WTC11 (cell line): ENCODE measurements at regions of chr21 and their contacts with region 1.

Region 1: GRCh38 chr21:39581414-39581813 is 31.3 kb upstream of the B3GALT5 start:
- DNase-seq: no peak
- ATAC-seq: peak; percentile 95
- H3K4me3 Mint-ChIP-seq: no peak overlapping the region
- H3K27ac Mint-ChIP-seq: no peak overlapping the region
- H3K4me1 Mint-ChIP-seq: peaks cover 28% of the 10 kb centered on the region
- H3K27me3 Mint-ChIP-seq: no peaks in the 10 kb centered on the region
- CTCF ChIP-seq: no peak

Region 2: GRCh38 chr21:39568361-39568760 is 13.1 kb before region 1 on chr21:
- CTCF ChIA-PET with region 1: interaction called, 10 read pairs
- POLR2A ChIA-PET with region 1: no interaction called
- DNase-seq: no peak
- ATAC-seq: peak; percentile 62
- H3K4me3 Mint-ChIP-seq: no peak overlapping the region
- H3K27ac Mint-ChIP-seq: no peak overlapping the region
- H3K4me1 Mint-ChIP-seq: peaks cover 8% of the 10 kb centered on the region
- H3K27me3 Mint-ChIP-seq: no peaks in the 10 kb centered on the region
- CTCF ChIP-seq: no peak

Region 3: DNA sequence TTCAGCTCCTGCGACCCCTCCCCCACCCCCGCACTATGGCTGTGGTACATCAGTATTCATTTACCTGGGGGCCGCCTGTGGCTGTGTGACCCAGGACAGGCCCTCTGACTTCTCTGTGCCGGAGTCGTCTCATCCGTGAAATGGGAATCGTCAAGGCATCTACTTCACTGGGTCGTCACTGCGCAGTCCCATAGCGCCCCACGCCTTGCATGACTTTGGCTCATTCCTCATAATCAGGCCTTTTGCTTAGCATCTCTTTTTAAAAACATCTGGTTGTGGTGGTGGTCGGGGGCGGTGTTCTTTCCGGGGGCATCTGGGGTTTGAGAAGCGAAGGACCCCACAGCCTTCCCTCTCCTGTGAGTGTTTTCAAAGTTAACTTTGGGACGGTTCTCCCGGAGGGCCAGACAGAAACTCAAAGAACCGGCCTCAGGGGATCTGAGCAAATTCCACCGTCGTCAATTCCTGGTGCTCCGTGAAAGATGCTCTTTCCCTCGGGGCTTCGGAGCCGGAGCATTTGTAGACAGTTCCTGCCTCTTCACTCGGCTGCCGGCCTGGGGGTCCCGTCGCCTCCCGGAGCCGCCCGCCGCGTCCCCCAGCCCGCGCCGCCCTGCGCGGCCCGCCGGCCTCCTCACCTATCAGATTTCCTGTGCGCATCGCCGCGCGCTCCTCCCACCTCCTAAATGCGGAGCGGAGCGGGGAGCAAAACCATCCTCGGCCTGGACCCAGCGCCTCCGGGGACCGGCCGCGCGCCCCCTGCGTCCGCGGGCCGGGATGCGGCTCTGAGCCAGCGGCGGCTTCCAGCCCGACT is 31.0 kb after region 1 on chr21 and contains the start of gene B3GALT5:
- CTCF ChIA-PET with region 1: interaction called, 11 read pairs
- POLR2A ChIA-PET with region 1: no interaction called
- DNase-seq: peak; percentile 88
- ATAC-seq: peak; percentile 86
- H3K4me3 Mint-ChIP-seq: peak within 1 kb of the TSS; percentile 92
- H3K27ac Mint-ChIP-seq: peak within 1 kb of the TSS; percentile 94
- H3K4me1 Mint-ChIP-seq: peaks cover 63% of the 10 kb centered on the region
- H3K27me3 Mint-ChIP-seq: no peaks in the 10 kb centered on the region
- CTCF ChIP-seq: no peak
- total RNA-seq, gene B3GALT5: 25.8 to 33.3 TPM (median 32.4 TPM) in 3 replicates